Activated CD4-positive, alpha-beta memory T cell treated with anti-CD3 and anti-CD28 coated beads for 36 hours (primary cell): ENCODE measurements at regions of chr6 and their contacts with region 1.

Region 1: DNA sequence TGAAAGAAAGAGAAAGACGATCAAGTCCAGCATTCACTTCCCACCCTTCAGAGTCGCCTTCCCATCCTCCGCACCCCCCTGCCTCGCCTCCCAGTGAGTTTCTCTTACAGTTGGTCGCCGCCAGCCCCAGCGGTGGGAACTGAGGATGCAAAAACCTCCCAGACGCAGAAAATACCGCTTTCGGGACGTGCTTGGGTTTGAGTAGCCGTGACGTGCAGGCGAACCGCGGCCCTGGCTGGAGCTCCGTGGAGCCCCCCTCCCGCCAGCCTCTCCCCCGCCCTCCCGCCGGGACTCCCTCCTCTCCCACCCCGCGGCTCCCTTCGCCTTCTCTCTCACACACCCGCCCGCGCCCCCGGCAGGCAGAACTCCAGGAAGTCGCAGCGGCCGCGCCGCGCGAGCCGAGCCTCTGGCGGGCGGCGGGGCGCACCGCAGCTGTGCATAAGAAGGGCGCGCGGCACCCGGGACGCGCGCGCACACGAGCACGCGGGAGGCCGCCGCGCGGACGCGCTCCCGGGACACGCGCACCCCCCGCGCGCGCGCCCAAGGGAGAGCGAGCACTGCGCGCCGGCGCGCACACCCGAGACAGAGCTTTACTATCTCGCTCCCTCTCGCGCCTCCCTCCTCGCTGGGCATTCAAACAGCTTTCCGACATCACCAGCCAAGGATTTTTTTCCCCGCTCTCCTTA is at the start of gene ADGRB3:
- DNase-seq: peak; percentile 42
- H3K4me3 Mint-ChIP-seq: peak within 1 kb of the TSS; percentile 71
- H3K27ac Mint-ChIP-seq: no peak within 1 kb of the TSS
- H3K4me1 Mint-ChIP-seq: peaks cover 16% of the 10 kb centered on the region
- H3K27me3 Mint-ChIP-seq: peaks cover 44% of the 10 kb centered on the region
- total RNA-seq, gene ADGRB3: not detected

Region 2: GRCh38 chr6:68778356-68779020 is 143.6 kb after region 1 on chr6:
- CTCF ChIA-PET with region 1: interaction called, 3 read pairs
- POLR2A ChIA-PET with region 1: no interaction called
- intact Hi-C with region 1: loop called (anchors 5 kb)
- DNase-seq: no peak
- H3K4me3 Mint-ChIP-seq: no peak overlapping the region
- H3K27ac Mint-ChIP-seq: no peak overlapping the region
- H3K4me1 Mint-ChIP-seq: no peaks in the 10 kb centered on the region
- H3K27me3 Mint-ChIP-seq: no peaks in the 10 kb centered on the region

Region 3: DNA sequence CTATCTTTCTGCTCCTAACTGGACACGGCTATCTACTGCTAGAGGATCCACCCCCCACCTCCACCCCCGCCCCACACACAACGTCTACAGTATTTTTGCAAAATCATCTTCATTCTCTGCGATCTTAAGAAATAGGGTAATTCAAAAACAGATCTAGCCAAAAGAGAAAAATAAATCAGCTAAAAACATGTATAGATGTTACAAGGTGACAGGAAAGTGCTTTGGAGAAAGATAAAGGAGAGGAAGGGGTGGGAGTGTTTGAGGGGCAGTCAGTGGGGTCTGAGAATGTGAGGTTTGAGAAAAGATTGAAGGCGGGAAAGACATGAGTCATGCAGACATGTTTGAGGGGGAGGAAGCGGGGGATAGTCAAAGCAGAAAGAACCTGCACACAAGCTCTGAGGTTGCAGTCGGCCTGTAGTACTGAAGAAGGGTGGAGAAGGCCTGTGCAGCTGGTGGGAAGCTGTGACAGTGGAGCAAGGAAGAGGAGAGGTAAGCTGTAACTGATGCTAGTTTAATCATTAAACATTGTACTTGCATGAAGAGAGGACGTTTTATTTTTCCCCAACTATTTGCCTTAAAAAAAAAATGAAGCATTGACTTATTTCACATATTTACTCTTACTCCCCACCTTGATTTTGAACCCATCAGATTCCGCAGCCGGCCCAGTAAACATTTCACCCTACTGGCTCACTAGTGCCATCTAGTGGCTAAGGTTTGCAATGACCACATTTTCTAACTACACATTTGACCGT is 332.9 kb after region 1 on chr6:
- CTCF ChIA-PET with region 1: interaction called, 3 read pairs
- POLR2A ChIA-PET with region 1: no interaction called
- intact Hi-C with region 1: loop called (anchors 2 kb)
- DNase-seq: peak; percentile 62
- H3K4me3 Mint-ChIP-seq: no peak overlapping the region
- H3K27ac Mint-ChIP-seq: no peak overlapping the region
- H3K4me1 Mint-ChIP-seq: peaks cover 8% of the 10 kb centered on the region
- H3K27me3 Mint-ChIP-seq: peaks cover 3% of the 10 kb centered on the region

Region 4: GRCh38 chr6:69719602-69720193 is 1084.8 kb after region 1 on chr6:
- CTCF ChIA-PET with region 1: no interaction called
- POLR2A ChIA-PET with region 1: no interaction called
- intact Hi-C with region 1: loop called (anchors 10 kb)
- DNase-seq: no peak
- H3K4me3 Mint-ChIP-seq: no peak overlapping the region
- H3K27ac Mint-ChIP-seq: no peak overlapping the region
- H3K4me1 Mint-ChIP-seq: peaks cover 4% of the 10 kb centered on the region
- H3K27me3 Mint-ChIP-seq: no peaks in the 10 kb centered on the region

Region 5: DNA sequence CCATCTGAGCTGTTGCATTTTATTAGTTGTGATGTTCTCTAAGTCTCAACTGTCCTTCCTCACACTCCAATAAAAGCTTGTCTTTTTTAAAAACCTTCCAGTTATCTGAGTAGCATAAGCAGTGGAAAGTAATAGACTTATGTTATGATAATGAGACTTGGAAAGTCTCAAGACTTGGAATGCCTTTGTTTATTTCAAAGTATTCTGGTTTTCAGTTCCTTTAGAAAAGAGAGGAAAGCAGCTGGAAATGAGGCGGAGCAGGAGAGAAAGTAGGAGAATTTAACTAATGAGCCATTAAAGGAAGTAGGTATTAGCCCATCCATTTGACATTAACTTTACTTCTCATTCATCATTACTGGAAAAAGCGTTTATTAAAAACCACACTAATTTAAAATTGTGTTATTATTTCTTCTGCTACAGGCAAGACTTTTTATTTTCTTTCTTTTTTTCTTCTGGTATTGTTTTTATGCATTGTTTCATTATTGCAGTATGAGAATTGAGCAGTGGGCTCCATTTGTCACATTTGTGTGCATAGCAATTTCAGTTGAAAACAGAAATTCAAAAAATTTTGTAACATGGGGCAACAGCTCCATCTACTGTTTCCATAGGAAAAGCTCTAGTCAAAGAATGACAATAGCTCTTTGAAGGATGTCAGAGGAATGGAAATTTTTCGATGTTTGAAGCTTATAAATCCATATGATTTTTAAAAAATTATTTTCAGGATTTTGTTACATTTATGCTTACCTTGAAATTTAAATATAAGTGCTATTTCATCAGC is 1473.2 kb after region 1 on chr6:
- CTCF ChIA-PET with region 1: no interaction called
- POLR2A ChIA-PET with region 1: no interaction called
- intact Hi-C with region 1: loop called (anchors 5 kb)
- DNase-seq: no peak
- H3K4me3 Mint-ChIP-seq: no peak overlapping the region
- H3K27ac Mint-ChIP-seq: no peak overlapping the region
- H3K4me1 Mint-ChIP-seq: no peaks in the 10 kb centered on the region
- H3K27me3 Mint-ChIP-seq: peaks cover 9% of the 10 kb centered on the region